ENCODE measurements at regions of chr4 and their contacts with region 1.

Region 1: DNA sequence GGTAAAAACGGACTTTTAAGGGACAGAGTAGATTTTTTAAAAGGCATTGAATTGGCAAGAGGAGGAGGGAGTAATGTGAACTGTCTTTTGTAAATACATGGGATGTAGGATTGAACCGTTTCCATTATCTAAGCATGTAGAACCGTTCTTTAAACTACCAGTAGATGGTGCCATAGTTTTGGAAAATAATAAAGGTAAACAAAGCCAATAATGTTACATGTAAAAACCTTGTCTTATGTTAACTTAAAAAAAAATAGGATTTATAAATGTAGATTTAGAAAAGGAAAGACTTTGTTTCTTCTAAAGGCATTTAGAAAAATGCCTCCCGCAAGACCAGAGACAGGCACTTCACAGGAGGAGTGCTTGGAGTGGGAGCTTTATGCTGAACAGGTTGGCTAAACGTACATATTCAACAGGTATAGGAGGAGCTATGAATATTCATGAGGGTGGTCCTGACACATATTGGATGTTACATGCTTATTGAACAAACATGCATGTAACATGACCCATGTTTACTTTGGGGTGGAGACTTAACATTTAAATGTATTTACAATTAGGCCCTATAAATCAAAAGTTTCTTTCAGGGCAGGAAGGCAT is 45.5 kb upstream of the FAM241A start:
- DNase-seq: peak; percentile 61
- ATAC-seq: peak; percentile 94
- H3K4me3 ChIP-seq: no peak overlapping the region
- H3K27ac ChIP-seq: no peak overlapping the region
- H3K4me1 ChIP-seq: no peaks in the 10 kb centered on the region; a peak in 1 of 4 replicates
- H3K27me3 ChIP-seq: no peaks in the 10 kb centered on the region
- CTCF ChIP-seq: peak; percentile 42 to 88 (median 72)
- POLR2A ChIP-seq: no peak
- RAD21 ChIP-seq: peak; percentile 88

Region 2: DNA sequence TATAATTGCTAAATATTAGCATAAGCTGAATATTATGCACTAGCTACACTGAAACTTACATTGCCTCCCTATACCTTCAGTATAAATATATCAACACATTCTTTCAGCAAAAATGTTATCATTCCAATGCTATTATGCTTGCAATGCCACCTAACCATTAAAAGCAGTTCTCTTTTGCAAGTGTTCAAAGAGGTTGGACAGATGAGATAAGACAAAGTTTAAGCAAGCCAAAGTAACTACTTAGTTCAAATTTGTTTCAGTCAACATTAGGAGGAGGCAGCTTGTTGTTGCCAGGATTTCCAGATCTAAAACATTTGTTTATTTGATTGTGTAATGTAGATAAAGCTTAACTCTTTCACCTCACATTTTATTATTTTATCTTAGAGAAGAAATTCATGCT is 278.5 kb before region 1 on chr4:
- CTCF ChIA-PET with region 1: no interaction called
- POLR2A ChIA-PET with region 1: no interaction called
- RAD21 ChIA-PET with region 1: no interaction called
- intact Hi-C with region 1: no loop called
- DNase-seq: no peak
- ATAC-seq: no peak
- H3K4me3 ChIP-seq: no peak overlapping the region
- H3K27ac ChIP-seq: no peak overlapping the region
- H3K4me1 ChIP-seq: no peaks in the 10 kb centered on the region
- H3K27me3 ChIP-seq: no peaks in the 10 kb centered on the region
- CTCF ChIP-seq: no peak
- POLR2A ChIP-seq: no peak
- RAD21 ChIP-seq: no peak

Region 3: DNA sequence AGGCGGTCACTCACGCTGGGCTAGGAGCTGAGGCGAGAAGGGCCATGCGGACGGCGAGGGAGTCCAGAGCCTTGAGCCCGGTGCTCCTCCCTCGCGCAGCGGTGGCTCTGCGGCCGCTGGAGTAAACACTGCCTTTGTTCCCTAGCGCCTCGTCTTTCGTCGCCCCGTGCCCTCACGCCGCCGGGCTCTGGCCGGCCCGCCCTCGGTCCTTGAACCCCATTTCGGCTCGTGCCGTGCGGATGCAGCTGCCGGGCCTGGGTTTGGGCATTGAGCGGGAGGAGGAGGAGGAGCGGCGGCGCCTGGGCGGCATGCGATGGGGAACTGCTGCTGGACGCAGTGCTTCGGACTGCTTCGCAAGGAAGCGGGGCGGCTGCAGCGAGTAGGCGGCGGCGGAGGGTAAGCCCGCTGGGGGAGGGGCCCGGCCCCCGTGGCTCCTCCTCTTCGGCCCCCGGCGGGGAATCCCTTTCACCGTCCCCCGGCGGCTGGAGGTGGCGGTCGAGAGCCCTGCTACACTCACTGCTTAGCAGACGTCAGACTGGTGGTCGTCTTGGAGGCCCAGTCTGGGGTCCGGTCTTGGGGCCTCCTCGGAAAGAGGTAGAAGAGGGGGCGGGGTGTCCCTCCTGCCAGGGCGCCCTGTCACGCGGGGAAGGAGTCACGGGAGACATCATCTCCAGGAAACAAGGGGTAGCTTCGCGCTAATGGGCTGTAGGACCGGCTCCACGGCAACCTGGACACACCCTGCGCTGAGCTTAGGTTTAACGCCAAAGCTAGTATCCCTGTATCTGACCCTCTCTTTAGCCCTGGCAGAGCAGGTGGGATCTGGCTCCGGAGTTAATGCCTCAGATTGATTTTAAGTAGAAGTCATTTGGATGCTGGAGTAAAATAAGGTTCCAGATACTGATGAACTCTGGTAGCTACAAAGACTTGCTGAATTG is 132.2 kb after region 1 on chr4 and contains the start of gene AP1AR:
- CTCF ChIA-PET with region 1: interaction called, 16 read pairs
- POLR2A ChIA-PET with region 1: interaction called, 5 read pairs
- RAD21 ChIA-PET with region 1: interaction called, 3 to 4 read pairs
- intact Hi-C with region 1: loop called (anchors 1 kb)
- DNase-seq: peak; percentile 44
- ATAC-seq: peak; percentile 76
- H3K4me3 ChIP-seq: peak within 1 kb of the TSS; percentile 82 to 89
- H3K27ac ChIP-seq: peak within 1 kb of the TSS; percentile 79
- H3K4me1 ChIP-seq: peaks cover 18 to 38% of the 10 kb centered on the region in 2 experiments; a peak in 3 of 4 replicates
- H3K27me3 ChIP-seq: no peaks in the 10 kb centered on the region
- CTCF ChIP-seq: peak in 2 of 3 experiments; percentile 38 to 40; a peak in 3 of 6 replicates
- POLR2A ChIP-seq: peak; percentile 65
- RAD21 ChIP-seq: no peak
- total RNA-seq, gene AP1AR: 56.7 TPM

Region 4: DNA sequence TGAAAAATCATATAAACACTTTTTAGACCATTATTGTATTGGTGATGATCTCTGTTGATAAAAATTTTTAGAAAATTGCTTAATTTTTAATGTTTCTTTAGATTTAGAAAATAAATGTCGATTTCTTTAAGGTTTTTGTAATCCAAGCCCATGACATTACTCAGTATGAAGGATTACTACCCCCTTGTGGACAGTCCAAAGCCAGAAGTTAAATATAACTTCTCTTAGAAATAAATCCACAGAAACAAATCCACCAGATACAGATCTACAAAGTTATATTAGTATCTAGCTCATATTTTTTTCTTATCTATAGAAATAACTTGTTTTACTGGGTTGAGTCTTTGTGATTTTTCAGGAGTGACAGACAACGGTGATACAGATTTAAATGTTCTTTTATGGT is 167.0 kb after region 1 on chr4:
- CTCF ChIA-PET with region 1: interaction called, 21 read pairs
- POLR2A ChIA-PET with region 1: interaction called, 3 read pairs
- RAD21 ChIA-PET with region 1: interaction called in 1 of 2 experiments, 4 read pairs
- intact Hi-C with region 1: loop called (anchors 10 kb)
- DNase-seq: no peak
- ATAC-seq: no peak
- H3K4me3 ChIP-seq: no peak overlapping the region
- H3K27ac ChIP-seq: no peak overlapping the region
- H3K4me1 ChIP-seq: no peaks in the 10 kb centered on the region; a peak in 1 of 4 replicates
- H3K27me3 ChIP-seq: no peaks in the 10 kb centered on the region
- CTCF ChIP-seq: peak; percentile 45 to 56 (median 53); a peak in 5 of 6 replicates
- POLR2A ChIP-seq: no peak
- RAD21 ChIP-seq: peak; percentile 54

Region 5: GRCh38 chr4:112321776-112322684 is 222.2 kb after region 1 on chr4:
- CTCF ChIA-PET with region 1: interaction called, 4 read pairs
- POLR2A ChIA-PET with region 1: no interaction called
- RAD21 ChIA-PET with region 1: no interaction called
- intact Hi-C with region 1: loop called (anchors 5 kb)
- DNase-seq: peak; percentile 33
- ATAC-seq: peak; percentile 83
- H3K4me3 ChIP-seq: no peak overlapping the region
- H3K27ac ChIP-seq: no peak overlapping the region
- H3K4me1 ChIP-seq: no peaks in the 10 kb centered on the region
- H3K27me3 ChIP-seq: no peaks in the 10 kb centered on the region
- CTCF ChIP-seq: peak; percentile 67 to 93 (median 84); a peak in 5 of 6 replicates
- POLR2A ChIP-seq: no peak
- RAD21 ChIP-seq: peak; percentile 60

Region 6: GRCh38 chr4:112523764-112524505 is 424.1 kb after region 1 on chr4:
- CTCF ChIA-PET with region 1: interaction called, 14 read pairs
- POLR2A ChIA-PET with region 1: no interaction called
- RAD21 ChIA-PET with region 1: interaction called in 1 of 2 experiments, 3 read pairs
- intact Hi-C with region 1: loop called (anchors 1 kb)
- DNase-seq: peak; percentile 73
- ATAC-seq: peak; percentile 99
- H3K4me3 ChIP-seq: peak overlapping the region; percentile 45 to 61
- H3K27ac ChIP-seq: no peak overlapping the region; the same call in 1 of the 2 replicates
- H3K4me1 ChIP-seq: peaks cover 0 to 9% of the 10 kb centered on the region in 2 experiments; a peak in 1 of 4 replicates
- H3K27me3 ChIP-seq: no peaks in the 10 kb centered on the region
- CTCF ChIP-seq: peak; percentile 83 to 98 (median 95); a peak in 5 of 6 replicates
- POLR2A ChIP-seq: no peak
- RAD21 ChIP-seq: peak; percentile 99

Region 7: DNA sequence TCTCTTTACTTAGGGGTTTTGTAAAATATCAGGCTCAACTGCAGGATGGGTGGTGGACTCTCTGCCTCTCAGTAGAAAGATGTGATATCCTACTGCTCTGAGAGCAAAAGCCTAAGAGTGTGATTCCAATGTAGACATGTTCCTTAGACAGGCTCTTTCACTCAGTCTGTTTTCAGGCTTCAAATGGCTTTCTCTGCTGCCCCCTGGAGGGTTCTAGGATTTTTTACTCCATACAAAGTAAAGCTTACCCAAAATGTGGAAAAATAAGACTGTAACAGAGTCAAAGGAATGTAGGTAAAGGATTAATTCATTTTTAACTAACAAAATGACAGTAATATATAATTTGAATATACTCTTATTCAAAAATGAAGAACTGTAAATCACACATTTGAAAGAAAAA is 504.8 kb after region 1 on chr4:
- CTCF ChIA-PET with region 1: interaction called, 17 read pairs
- POLR2A ChIA-PET with region 1: no interaction called
- RAD21 ChIA-PET with region 1: no interaction called
- intact Hi-C with region 1: loop called (anchors 10 kb)
- DNase-seq: peak; percentile 18
- ATAC-seq: peak; percentile 88
- H3K4me3 ChIP-seq: no peak overlapping the region
- H3K27ac ChIP-seq: no peak overlapping the region
- H3K4me1 ChIP-seq: no peaks in the 10 kb centered on the region
- H3K27me3 ChIP-seq: no peaks in the 10 kb centered on the region
- CTCF ChIP-seq: peak; percentile 64 to 70 (median 69)
- POLR2A ChIP-seq: no peak
- RAD21 ChIP-seq: peak; percentile 83

Measured in HCT116 (cell line).